Aorta (tissue), 5 donors: ENCODE measurements at regions of chr22 and their contacts with region 1.

Region 1: DNA sequence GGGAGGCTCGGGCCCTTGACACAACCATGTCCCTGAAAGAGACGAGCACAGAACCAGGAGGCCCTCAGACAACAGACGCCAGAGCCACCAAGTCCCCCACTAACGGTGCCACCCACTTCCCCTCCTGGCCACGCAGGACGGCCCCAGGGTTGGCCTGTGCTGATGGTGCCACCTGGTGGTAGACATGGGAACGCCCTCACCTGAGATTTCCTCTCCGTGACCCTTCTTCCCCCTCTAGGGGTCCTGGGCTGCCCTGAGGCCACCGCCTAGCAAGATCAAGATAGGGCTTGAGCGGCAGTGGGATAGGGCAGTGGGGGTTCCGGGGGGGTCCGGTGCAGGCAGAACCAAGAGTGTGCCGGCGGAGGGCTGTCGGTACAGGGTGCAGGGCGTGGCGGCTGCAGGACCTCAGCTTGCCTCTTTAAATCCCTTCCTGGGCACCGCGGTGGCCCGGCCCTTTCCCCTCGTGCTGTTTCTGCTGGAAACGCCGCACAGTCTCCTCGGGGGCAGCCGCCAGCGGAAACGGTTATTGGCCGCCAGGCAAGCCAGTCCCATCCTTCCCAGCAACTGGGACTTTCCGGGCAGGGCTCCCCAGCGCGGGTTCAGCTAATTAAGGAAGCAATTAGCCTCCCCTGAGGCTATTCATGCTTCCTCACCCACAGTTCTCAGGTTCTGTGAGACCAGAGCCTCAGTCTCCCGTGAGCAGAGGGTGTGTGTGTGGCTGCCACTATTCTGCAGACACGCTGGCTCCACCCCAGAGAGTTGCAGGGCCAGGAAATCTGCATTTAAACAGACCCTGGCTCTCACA is 5.5 kb upstream of the NFAM1 start:
- DNase-seq: peak; percentile 87 to 91
- ATAC-seq: peak; percentile 82
- H3K4me3 ChIP-seq: no peak overlapping the region
- H3K27ac ChIP-seq: no peak overlapping the region
- H3K4me1 ChIP-seq: no peaks in the 10 kb centered on the region
- H3K27me3 ChIP-seq: no peaks in the 10 kb centered on the region

Region 2: GRCh38 chr22:41940832-41941765 is 496.6 kb before region 1 on chr22:
- intact Hi-C with region 1: no loop called
- DNase-seq: peak; percentile 90 to 92
- ATAC-seq: peak; percentile 92
- H3K4me3 ChIP-seq: no peak overlapping the region
- H3K27ac ChIP-seq: no peak overlapping the region
- H3K4me1 ChIP-seq: no peaks in the 10 kb centered on the region
- H3K27me3 ChIP-seq: no peaks in the 10 kb centered on the region

Region 3: DNA sequence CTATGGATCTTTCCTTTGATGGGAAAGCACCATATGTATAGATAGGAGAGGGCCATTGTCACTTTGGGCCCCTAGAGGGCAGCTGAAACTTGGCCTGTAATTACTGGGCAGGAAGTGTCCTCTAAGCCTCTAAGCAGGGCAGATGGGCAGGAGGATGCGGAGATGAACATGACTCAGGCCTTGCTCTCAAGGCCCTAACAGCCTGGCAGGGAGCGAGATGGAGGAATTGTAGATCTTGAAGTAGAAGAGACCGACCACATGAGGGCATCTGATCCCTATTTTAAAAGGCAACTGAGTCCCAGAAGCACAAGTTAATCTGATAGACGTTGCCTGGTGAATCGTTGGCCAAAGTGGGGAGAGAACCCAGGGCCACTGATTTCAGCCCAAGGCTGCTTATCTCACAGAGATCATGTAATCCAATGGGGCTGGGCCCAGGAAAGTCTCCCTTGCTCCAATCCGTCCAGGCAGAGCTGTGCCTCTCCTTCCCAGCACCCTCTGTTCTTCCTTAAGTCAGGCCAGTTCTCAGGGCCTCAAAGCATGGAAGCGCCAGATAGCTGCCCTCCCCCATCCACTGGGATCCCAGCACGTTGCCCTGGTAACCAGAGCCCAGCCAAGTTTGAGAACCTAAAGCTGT is 471.0 kb before region 1 on chr22:
- intact Hi-C with region 1: loop called in 1 of 2 experiments (anchors 10 kb)
- DNase-seq: peak in 1 of 2 donors; percentile 61
- ATAC-seq: no peak
- H3K4me3 ChIP-seq: no peak overlapping the region
- H3K27ac ChIP-seq: no peak overlapping the region
- H3K4me1 ChIP-seq: no peaks in the 10 kb centered on the region
- H3K27me3 ChIP-seq: no peaks in the 10 kb centered on the region

Region 4: DNA sequence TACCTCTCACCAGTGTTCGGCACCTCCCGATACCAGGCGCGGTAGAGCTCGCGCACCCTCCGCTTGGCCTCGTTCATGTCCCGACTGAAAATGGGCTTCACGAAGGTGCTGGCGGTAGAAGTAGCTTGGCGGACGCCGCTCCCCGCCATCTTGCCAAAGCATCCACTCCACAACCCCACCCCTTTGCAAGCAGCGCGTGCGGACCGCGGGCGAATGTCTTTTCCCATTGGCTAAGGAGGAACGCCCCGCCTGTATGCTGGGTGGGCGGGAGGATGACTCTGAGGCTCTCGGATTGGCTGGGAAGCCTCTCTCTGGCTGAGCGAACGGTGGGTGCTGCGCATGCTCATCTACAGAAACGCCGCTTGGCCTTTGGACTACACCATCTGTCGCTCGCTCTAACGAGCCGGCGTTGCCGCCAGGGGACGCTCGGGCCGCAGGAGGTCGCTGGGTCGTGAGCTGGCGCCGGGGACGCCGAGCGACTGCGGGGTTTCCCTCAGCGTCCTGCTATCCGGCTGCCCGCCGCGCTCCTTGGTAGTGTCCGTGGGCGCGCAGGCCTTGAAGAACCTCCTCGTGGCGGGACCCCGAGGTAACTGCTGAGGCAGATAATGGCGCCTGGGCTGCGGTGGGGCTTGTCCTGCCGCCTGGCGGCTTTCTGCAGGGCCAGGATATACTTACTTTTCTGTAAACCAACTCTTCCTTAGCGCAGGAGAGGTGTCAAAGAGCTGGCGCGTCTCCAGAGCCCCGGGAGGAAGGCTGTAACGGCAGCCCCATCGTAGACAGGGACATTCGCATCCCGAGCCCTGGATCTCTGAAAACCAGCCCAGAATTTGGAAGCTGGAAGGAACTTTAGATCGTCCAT is 346.9 kb before region 1 on chr22 and contains the start of gene NDUFA6:
- intact Hi-C with region 1: loop called (anchors 2 to 5 kb)
- DNase-seq: peak; percentile 99
- ATAC-seq: peak; percentile 98
- H3K4me3 ChIP-seq: peak within 1 kb of the TSS; percentile 74 to 90
- H3K27ac ChIP-seq: peak within 1 kb of the TSS; percentile 54 to 94
- H3K4me1 ChIP-seq: peaks cover 0 to 3% of the 10 kb centered on the region in 2 donors
- H3K27me3 ChIP-seq: no peaks in the 10 kb centered on the region
- total RNA-seq, gene NDUFA6: 30.6 to 34.1 TPM

Region 5: GRCh38 chr22:42101199-42101598 is 336.5 kb before region 1 on chr22:
- intact Hi-C with region 1: no loop called
- DNase-seq: no peak
- ATAC-seq: no peak
- H3K4me3 ChIP-seq: no peak overlapping the region
- H3K27ac ChIP-seq: no peak overlapping the region
- H3K4me1 ChIP-seq: no peaks in the 10 kb centered on the region
- H3K27me3 ChIP-seq: no peaks in the 10 kb centered on the region

Region 6: DNA sequence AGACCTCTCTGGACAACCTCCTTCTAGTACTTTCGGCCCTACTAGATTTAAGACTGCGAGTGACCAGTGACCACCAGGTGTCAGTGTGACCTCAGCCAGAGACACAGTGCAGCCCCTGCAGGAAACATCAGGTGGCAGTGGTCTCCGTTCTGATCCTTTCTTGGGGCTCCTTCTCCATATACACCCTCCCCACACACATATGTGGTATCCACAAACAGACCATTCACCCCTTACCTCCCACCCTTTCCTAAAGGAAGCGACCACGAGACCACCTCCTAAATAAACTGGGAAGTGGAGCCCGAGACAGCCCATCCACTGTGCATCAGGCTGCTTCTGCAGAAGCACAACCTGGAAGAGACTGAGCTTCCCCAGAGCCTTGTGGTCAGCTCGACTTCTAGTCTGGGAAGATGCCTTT is 268.6 kb before region 1 on chr22:
- intact Hi-C with region 1: loop called (anchors 1 kb)
- DNase-seq: peak; percentile 70 to 83
- ATAC-seq: peak; percentile 70
- H3K4me3 ChIP-seq: no peak overlapping the region
- H3K27ac ChIP-seq: no peak overlapping the region
- H3K4me1 ChIP-seq: no peaks in the 10 kb centered on the region
- H3K27me3 ChIP-seq: no peaks in the 10 kb centered on the region

Region 7: GRCh38 chr22:42270512-42271417 is 166.9 kb before region 1 on chr22 and contains the start of gene TCF20:
- intact Hi-C with region 1: loop called (anchors 5 to 10 kb)
- DNase-seq: peak; percentile 86 to 92
- ATAC-seq: peak; percentile 79
- H3K4me3 ChIP-seq: peak within 1 kb of the TSS; percentile 92 to 95
- H3K27ac ChIP-seq: peak within 1 kb of the TSS in 1 of 2 donors; percentile 26
- H3K4me1 ChIP-seq: no peaks in the 10 kb centered on the region
- H3K27me3 ChIP-seq: no peaks in the 10 kb centered on the region
- total RNA-seq, gene TCF20: 29.9 to 42.9 TPM